AG04449 (cell line): ENCODE measurements at regions of chr15 and their contacts with region 1.

Region 1: GRCh38 chr15:39686000-39686613 is 96.5 kb downstream of the FSIP1 start:
- DNase-seq: no peak
- H3K4me3 ChIP-seq: no peak overlapping the region
- CTCF ChIP-seq: peak; percentile 69

Region 2: DNA sequence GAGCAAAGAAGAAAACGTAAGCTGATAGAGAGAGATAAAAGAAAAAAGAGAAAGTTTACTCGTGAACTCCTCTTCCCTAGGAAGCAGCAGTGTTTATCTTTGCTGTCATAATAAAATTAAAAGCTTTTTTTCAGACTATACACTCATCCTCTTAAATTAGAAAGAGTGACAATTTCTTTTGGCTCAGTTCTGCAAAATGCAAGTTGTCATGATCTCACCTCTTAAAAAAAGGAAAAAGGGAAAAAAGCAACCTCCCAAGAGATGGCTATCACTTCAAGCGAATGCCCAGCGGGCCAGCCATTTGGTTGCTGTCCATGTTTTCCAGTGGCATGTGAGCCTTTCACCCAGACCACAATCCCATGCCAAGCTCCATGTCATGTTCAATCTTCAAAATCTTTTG is 112.3 kb before region 1 on chr15:
- CTCF ChIA-PET with region 1: no interaction called
- POLR2A ChIA-PET with region 1: no interaction called
- DNase-seq: no peak
- H3K4me3 ChIP-seq: no peak overlapping the region
- CTCF ChIP-seq: no peak

Region 3: GRCh38 chr15:39704689-39705088 is 18.6 kb after region 1 on chr15:
- CTCF ChIA-PET with region 1: interaction called, 48 read pairs
- POLR2A ChIA-PET with region 1: no interaction called
- DNase-seq: no peak
- H3K4me3 ChIP-seq: no peak overlapping the region
- CTCF ChIP-seq: no peak

Region 4: DNA sequence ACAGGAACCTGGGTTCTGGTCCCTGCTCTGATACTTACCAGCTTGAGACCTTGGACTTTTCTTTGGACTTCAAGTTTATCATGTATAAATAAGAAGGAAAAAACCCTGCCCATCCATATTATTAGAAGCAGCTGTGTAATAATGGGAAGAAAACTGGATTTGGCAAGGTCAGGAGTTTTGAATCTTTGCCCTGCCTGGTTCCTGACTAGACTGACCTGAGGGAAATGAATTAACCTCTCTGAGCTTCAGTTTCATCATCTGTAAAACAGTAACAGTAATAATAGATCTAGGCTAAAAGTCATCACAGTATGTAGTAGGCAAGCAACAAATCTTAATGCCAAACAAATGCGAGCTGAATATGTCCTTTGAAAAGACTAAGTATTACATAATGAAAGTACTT is 27.7 kb after region 1 on chr15:
- CTCF ChIA-PET with region 1: interaction called, 19 read pairs
- POLR2A ChIA-PET with region 1: no interaction called
- DNase-seq: no peak
- H3K4me3 ChIP-seq: no peak overlapping the region
- CTCF ChIP-seq: no peak

Region 5: GRCh38 chr15:39720621-39721611 is 34.8 kb after region 1 on chr15:
- CTCF ChIA-PET with region 1: interaction called, 19 read pairs
- POLR2A ChIA-PET with region 1: no interaction called
- DNase-seq: peak; percentile 78
- H3K4me3 ChIP-seq: no peak overlapping the region
- CTCF ChIP-seq: no peak

Region 6: GRCh38 chr15:39736412-39737197 is 50.5 kb after region 1 on chr15:
- CTCF ChIA-PET with region 1: interaction called, 13 read pairs
- POLR2A ChIA-PET with region 1: no interaction called
- DNase-seq: no peak
- H3K4me3 ChIP-seq: no peak overlapping the region
- CTCF ChIP-seq: no peak